HepG2 (cell line): ENCODE measurements at regions of chr13 and their contacts with region 1.

Region 1: DNA sequence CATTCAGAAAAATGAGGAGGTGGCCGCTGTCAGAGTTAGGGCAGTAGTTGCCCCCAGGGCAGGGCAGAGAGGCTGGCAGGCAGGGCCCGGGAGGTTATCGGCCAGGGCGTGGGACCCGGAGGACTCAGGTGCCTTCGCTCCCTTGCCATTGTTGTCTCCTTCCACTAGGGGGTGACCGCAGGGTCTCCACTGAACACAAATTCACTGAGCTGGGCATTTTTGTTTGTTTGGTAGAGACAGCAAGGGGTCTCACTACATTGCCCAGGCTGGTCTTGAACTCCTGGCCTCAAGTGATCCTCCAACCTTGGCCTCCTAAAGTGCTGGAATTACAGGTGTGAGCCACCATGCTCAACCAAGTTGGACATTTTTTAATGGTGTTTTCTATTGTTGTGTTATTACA is 25.1 kb downstream of the CARS2 start:
- DNase-seq: peak; percentile 41
- ATAC-seq: peak; percentile 49
- H3K4me3 ChIP-seq: no peak overlapping the region
- H3K27ac ChIP-seq: no peak overlapping the region
- H3K4me1 ChIP-seq: peaks cover 26% of the 10 kb centered on the region
- H3K27me3 ChIP-seq: no peaks in the 10 kb centered on the region
- CTCF ChIP-seq: peak; percentile 40
- EP300 ChIP-seq: no peak
- POLR2A ChIP-seq: no peak
- RAD21 ChIP-seq: peak; percentile 49; the same call in 1 of the 2 replicates

Region 2: DNA sequence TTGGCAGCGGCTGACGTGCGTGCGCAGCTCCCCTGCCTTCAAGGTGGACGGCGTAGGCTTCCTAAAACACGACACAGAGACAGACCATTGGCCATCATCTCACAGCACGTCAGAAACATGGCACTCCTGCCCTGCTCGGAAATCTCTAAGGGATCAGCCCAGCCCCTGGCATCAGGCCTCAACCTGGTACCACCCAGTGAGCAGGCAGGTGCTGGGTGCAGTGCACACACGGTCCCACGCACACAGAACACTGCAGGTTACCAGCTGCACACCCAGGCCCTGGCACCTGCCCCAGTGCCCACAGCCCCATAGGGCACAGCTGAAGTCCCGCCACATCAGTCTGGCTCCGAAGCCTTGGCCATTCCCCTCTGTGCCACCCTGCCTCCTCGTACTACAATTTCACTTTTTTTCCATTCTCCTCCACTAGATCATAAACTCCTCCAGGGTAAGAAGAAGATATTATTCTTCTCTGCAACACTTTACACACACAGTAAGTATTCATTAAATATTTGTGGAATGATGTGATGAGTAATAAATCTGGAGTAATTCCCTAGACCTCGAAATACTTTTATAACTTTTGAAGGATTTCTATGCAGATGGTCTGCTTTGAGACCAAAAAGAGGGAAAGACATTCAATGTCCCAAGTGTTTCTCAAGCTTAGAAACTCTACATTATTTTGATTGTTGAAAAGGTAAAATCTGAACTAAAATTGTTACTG is 530.3 kb before region 1 on chr13:
- CTCF ChIA-PET with region 1: no interaction called
- POLR2A ChIA-PET with region 1: no interaction called
- in situ Hi-C with region 1: no loop called
- intact Hi-C with region 1: no loop called
- DNase-seq: no peak
- ATAC-seq: no peak
- H3K4me3 ChIP-seq: no peak overlapping the region
- H3K27ac ChIP-seq: no peak overlapping the region
- H3K4me1 ChIP-seq: no peaks in the 10 kb centered on the region
- H3K27me3 ChIP-seq: peaks cover 0 to 20% of the 10 kb centered on the region in 2 experiments; a peak in 3 of 5 replicates
- CTCF ChIP-seq: no peak
- EP300 ChIP-seq: no peak
- POLR2A ChIP-seq: no peak
- RAD21 ChIP-seq: no peak

Region 3: DNA sequence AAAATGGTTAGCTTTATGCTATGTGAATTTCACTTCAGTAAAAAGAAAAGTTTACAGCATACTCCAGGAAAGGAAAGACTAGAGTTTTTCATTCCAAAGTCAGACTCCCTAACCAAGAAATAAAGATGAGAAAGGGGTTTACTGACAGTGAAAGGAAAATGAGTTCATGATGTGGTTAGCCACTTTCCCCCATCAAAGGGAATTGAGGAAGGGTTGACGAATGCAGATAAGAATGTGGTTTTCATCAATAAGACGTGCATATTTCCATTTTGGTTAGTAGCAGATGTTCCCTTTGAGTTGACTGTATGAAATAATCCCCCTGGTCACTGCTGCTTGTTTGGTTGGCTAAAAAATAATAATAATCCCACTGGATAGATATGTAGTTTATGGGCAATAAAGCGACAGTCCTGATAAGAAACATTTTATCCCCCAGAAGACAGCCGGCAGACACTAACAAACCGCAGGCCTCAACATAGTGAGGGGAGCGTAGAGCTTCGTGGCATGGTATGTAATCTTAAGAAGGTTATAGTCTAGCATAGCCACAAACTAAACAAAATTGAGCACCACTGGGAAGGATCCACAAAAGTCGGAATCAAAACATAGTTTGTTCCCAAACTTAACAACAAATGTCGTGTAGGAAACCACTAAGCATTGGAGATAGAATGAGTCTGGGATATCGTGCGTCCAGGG is 259.0 kb before region 1 on chr13:
- CTCF ChIA-PET with region 1: no interaction called
- POLR2A ChIA-PET with region 1: no interaction called
- in situ Hi-C with region 1: no loop called
- intact Hi-C with region 1: no loop called
- DNase-seq: no peak
- ATAC-seq: no peak
- H3K4me3 ChIP-seq: no peak overlapping the region
- H3K27ac ChIP-seq: no peak overlapping the region
- H3K4me1 ChIP-seq: no peaks in the 10 kb centered on the region
- H3K27me3 ChIP-seq: peaks cover 0 to 44% of the 10 kb centered on the region in 2 experiments; a peak in 2 of 5 replicates
- CTCF ChIP-seq: no peak
- EP300 ChIP-seq: no peak
- POLR2A ChIP-seq: no peak
- RAD21 ChIP-seq: no peak

Region 4: DNA sequence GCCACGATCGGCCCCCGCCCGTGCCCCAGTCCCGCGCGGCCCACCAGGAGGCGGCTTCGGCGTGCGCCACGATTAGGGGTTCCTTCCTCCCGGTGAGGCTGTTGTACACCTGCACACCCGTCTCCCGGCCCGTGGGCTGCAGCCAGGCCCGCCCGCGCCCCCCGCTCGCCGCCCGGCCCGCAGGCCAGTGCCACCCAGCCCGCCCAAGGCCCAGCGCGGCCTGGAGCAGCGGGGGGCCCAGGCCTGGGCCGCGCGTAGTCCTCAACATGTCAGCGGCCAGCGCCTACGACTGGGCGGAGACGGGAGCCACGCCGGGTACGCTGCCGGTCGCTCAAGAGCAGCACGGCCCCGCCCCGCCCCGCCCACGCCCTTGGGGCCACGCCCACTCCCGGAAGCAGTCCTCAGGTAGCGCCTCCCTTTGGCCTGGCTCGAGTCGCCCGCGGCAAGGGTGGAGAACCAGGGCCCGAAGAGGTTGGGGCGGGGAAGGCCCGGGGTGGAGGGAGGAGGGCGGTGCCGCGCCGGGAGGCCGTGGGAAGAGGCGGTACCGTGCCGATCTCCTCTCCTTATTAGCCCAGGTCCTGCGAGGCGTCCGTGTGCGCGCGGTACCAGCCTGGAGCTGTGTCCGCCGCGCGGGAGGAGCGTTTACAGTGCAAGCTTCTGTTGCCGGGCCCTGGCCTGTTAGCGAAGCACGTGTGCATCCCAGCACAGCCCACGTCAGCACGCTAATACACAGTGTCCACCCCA is 25.1 kb after region 1 on chr13 and contains the start of gene CARS2:
- CTCF ChIA-PET with region 1: no interaction called
- POLR2A ChIA-PET with region 1: interaction called, 44 read pairs
- in situ Hi-C with region 1: no loop called
- intact Hi-C with region 1: no loop called
- DNase-seq: peak; percentile 94
- ATAC-seq: peak; percentile 98
- H3K4me3 ChIP-seq: peak within 1 kb of the TSS; percentile 72 to 97 (median 92)
- H3K27ac ChIP-seq: peak within 1 kb of the TSS; percentile 73
- H3K4me1 ChIP-seq: peaks cover 58% of the 10 kb centered on the region
- H3K27me3 ChIP-seq: no peaks in the 10 kb centered on the region; a peak in 1 of 5 replicates
- CTCF ChIP-seq: peak; percentile 61
- EP300 ChIP-seq: no peak
- POLR2A ChIP-seq: peak in 1 of 2 experiments; percentile 78; a peak in 2 of 4 replicates
- RAD21 ChIP-seq: peak; percentile 33; the same call in 1 of the 2 replicates
- total RNA-seq, gene CARS2: 54.3 and 59.3 TPM in 2 replicates

Region 5: GRCh38 chr13:110715395-110716235 is 34.8 kb after region 1 on chr13:
- CTCF ChIA-PET with region 1: no interaction called
- POLR2A ChIA-PET with region 1: interaction called, 44 read pairs
- in situ Hi-C with region 1: no loop called
- intact Hi-C with region 1: loop called (anchors 1 kb)
- DNase-seq: peak; percentile 99
- ATAC-seq: peak; percentile 75
- H3K4me3 ChIP-seq: peak overlapping the region; percentile 76 to 98 (median 96)
- H3K27ac ChIP-seq: peak overlapping the region; percentile 89
- H3K4me1 ChIP-seq: peaks cover 16% of the 10 kb centered on the region
- H3K27me3 ChIP-seq: no peaks in the 10 kb centered on the region; a peak in 1 of 5 replicates
- CTCF ChIP-seq: peak; percentile 31; the same call in 1 of the 2 replicates
- EP300 ChIP-seq: no peak
- POLR2A ChIP-seq: no peak; a peak in 1 of 4 replicates
- RAD21 ChIP-seq: no peak; the same call in 1 of the 2 replicates

Region 6: GRCh38 chr13:110759710-110760109 is 78.9 kb after region 1 on chr13:
- CTCF ChIA-PET with region 1: no interaction called
- POLR2A ChIA-PET with region 1: no interaction called
- in situ Hi-C with region 1: no loop called
- intact Hi-C with region 1: no loop called
- DNase-seq: no peak
- ATAC-seq: no peak
- H3K4me3 ChIP-seq: no peak overlapping the region
- H3K27ac ChIP-seq: no peak overlapping the region
- H3K4me1 ChIP-seq: no peaks in the 10 kb centered on the region
- H3K27me3 ChIP-seq: no peaks in the 10 kb centered on the region; a peak in 1 of 5 replicates
- CTCF ChIP-seq: no peak
- EP300 ChIP-seq: no peak
- POLR2A ChIP-seq: no peak
- RAD21 ChIP-seq: no peak

Region 7: DNA sequence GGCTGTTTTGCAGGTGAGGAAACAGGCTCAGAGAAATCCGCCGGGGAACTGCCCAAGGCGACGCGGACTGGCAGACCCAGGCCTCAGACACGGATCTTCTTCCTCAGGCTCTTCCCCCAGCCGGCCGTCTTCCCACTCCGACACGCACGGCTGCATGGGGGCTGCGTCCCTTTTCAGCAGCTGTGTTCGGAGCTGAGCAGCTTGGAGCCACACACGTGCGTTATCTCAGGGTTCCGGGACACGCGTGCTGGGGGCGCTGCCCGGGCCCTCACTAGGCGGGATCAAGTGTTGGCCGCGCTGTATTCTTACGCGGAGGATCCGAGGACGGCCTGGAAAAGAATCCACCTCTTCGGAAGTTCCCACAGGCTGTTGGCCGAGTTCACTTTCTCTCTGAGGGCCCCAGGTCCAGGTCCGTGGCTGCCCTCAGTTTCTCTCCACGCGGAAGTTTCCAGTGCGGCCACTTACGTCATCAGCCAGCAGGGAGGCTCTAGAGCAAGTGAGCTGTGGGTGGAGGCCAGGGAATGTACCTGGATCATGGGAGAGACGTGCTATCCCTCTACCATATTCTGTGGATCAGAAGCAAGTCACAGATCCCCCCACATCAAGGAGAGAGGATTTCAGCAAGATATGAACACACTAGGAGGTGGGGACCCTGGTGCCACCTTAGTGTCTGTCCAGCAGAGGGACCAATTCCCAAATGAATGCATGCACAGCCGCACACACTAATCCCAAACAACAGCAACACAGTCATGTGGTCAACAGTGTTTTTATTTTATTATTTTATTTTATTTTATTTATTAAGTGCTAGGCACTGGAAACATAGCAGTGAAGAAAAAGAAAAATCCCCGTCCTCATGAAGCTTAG is 133.1 kb after region 1 on chr13:
- CTCF ChIA-PET with region 1: interaction called, 15 read pairs
- POLR2A ChIA-PET with region 1: no interaction called
- in situ Hi-C with region 1: loop called (anchors 10 kb)
- intact Hi-C with region 1: loop called (anchors 1 kb)
- DNase-seq: no peak
- ATAC-seq: peak; percentile 63
- H3K4me3 ChIP-seq: no peak overlapping the region
- H3K27ac ChIP-seq: no peak overlapping the region
- H3K4me1 ChIP-seq: peaks cover 9% of the 10 kb centered on the region; the same call in 1 of the 2 replicates
- H3K27me3 ChIP-seq: peaks cover 0 to 22% of the 10 kb centered on the region in 2 experiments; a peak in 2 of 5 replicates
- CTCF ChIP-seq: peak; percentile 29; the same call in 1 of the 2 replicates
- EP300 ChIP-seq: no peak
- POLR2A ChIP-seq: no peak
- RAD21 ChIP-seq: no peak